ENCODE measurements at regions of chr20 and their contacts with region 1.

Region 1: DNA sequence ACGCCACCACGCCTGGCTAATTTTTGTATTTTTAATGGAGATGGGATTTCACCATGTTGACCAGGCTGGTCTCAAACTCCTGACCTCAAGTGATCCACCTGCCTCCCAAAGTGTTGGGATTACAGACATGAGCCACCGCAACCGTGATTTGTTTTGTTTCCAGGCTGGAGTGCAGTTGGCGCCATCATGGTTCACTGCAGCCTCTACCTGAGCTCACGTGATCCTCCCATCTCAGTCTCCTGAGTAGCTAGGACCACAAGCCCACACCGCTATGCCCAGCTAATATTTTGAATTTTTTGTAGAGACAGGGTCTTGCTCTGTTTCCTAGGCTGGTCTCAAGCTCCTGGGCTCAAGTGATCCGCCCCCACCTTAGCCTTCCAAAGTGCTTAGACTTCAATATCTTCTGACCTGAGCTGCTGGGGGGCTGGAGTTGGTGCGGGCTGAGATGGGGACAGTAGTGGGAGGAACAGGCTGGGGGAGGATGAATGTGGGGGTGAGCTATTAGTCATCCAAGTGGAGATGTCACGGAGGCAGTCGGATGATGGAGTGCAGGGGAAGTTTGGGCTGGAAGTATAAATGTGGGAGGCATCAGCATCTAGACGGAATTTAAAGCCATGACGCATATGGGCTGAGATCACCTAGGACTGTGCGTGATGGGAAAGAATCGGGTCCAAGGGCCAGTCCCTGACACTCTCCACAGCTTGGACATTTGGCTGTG is 23.1 kb upstream of the ZMYND8 start:
- DNase-seq: no peak
- ATAC-seq: no peak
- H3K4me3 Mint-ChIP-seq: no peak overlapping the region
- H3K27ac Mint-ChIP-seq: peak overlapping the region; percentile 55
- H3K4me1 Mint-ChIP-seq: peaks cover 37% of the 10 kb centered on the region
- H3K27me3 Mint-ChIP-seq: no peaks in the 10 kb centered on the region

Region 2: GRCh38 chr20:46720776-46721425 is 658.7 kb before region 1 on chr20:
- CTCF ChIA-PET with region 1: no interaction called
- DNase-seq: no peak
- ATAC-seq: no peak
- H3K4me3 Mint-ChIP-seq: no peak overlapping the region
- H3K27ac Mint-ChIP-seq: no peak overlapping the region
- H3K4me1 Mint-ChIP-seq: no peaks in the 10 kb centered on the region
- H3K27me3 Mint-ChIP-seq: no peaks in the 10 kb centered on the region

Region 3: DNA sequence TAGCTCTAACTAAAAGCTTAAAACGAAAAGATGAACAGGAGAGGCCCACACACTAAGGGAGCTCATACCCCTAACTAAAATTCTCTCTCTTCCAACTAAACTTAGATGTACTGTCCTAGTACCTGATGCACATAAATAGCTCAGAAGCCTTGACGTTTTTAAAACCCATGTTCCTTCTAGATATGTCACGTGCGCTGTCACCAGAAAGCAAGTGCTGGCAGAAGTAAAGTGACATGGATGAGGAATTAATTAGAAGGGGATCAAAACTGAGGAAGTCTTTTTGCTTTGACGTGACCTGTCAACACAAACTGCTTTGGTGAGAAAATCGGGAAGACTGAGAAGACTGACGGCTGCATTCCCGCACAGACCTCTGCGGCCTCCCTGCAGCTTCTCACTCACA is 165.6 kb before region 1 on chr20:
- CTCF ChIA-PET with region 1: interaction called, 31 read pairs
- DNase-seq: no peak
- ATAC-seq: no peak
- H3K4me3 Mint-ChIP-seq: no peak overlapping the region
- H3K27ac Mint-ChIP-seq: no peak overlapping the region
- H3K4me1 Mint-ChIP-seq: no peaks in the 10 kb centered on the region
- H3K27me3 Mint-ChIP-seq: no peaks in the 10 kb centered on the region

Region 4: GRCh38 chr20:47262365-47263013 is 117.1 kb before region 1 on chr20:
- CTCF ChIA-PET with region 1: interaction called, 18 read pairs
- DNase-seq: no peak
- ATAC-seq: no peak
- H3K4me3 Mint-ChIP-seq: no peak overlapping the region
- H3K27ac Mint-ChIP-seq: no peak overlapping the region
- H3K4me1 Mint-ChIP-seq: peaks cover 28% of the 10 kb centered on the region
- H3K27me3 Mint-ChIP-seq: no peaks in the 10 kb centered on the region

Region 5: GRCh38 chr20:47305667-47306066 is 73.9 kb before region 1 on chr20:
- CTCF ChIA-PET with region 1: interaction called, 17 read pairs
- DNase-seq: no peak
- ATAC-seq: no peak
- H3K4me3 Mint-ChIP-seq: no peak overlapping the region
- H3K27ac Mint-ChIP-seq: peak overlapping the region; percentile 54
- H3K4me1 Mint-ChIP-seq: peaks cover 18% of the 10 kb centered on the region
- H3K27me3 Mint-ChIP-seq: no peaks in the 10 kb centered on the region

Region 6: GRCh38 chr20:47392015-47392720 is 12.6 kb after region 1 on chr20:
- CTCF ChIA-PET with region 1: interaction called, 22 read pairs
- DNase-seq: no peak
- ATAC-seq: peak; percentile 42
- H3K4me3 Mint-ChIP-seq: no peak overlapping the region
- H3K27ac Mint-ChIP-seq: peak overlapping the region; percentile 59
- H3K4me1 Mint-ChIP-seq: peaks cover 15% of the 10 kb centered on the region
- H3K27me3 Mint-ChIP-seq: no peaks in the 10 kb centered on the region

Region 7: GRCh38 chr20:47576516-47577033 is 197.0 kb after region 1 on chr20:
- CTCF ChIA-PET with region 1: no interaction called
- DNase-seq: no peak
- ATAC-seq: peak; percentile 83
- H3K4me3 Mint-ChIP-seq: peak overlapping the region; percentile 50
- H3K27ac Mint-ChIP-seq: peak overlapping the region; percentile 60
- H3K4me1 Mint-ChIP-seq: peaks cover 52% of the 10 kb centered on the region
- H3K27me3 Mint-ChIP-seq: no peaks in the 10 kb centered on the region

Region 8: DNA sequence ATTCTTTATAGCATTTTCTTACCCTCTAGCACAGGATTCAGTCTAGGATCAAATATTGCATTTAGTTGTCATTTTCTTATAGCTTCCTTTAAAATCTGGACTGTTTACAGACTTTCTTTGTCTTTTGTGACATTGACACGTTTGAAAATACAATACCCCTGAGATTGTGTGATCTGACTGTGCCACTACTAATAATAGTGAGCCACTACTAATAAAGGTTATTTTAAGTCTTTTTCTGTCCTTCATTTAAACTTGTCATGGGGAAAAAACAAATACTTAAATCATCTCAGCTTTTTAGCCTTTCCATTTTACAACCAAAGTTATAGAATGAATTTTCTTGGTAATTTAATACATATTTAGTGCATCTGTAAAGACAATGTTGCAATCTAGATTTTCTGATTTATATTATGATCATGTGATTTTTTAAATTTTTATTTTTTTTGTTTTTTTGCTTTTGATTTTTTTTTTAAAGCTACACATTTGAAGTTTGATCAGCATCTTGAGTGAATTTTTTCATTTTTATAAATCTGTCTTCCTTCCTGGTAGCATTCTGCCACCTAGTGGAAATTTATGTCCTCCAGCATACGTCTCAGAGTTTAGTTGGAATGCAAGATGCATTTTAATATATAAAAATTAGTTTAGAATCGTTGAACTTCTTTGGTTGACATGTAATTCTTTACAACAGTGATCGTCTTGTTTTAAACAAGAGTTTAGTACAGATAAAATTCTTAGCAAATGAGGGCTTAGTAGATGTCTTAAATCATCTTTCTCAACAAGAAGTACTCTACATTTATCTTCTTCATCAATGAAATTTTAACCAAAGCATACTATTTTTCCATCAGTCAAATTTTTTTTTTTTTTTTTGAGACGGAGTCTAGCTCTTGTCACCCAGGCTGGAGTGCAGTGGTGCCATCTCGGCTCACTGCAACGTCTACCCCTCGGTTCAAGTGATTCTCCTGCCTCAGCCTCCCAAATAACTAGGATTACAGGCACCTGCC is 241.5 kb after region 1 on chr20:
- CTCF ChIA-PET with region 1: interaction called, 53 read pairs
- DNase-seq: no peak
- ATAC-seq: peak; percentile 49
- H3K4me3 Mint-ChIP-seq: no peak overlapping the region
- H3K27ac Mint-ChIP-seq: peak overlapping the region; percentile 9
- H3K4me1 Mint-ChIP-seq: peaks cover 46% of the 10 kb centered on the region
- H3K27me3 Mint-ChIP-seq: no peaks in the 10 kb centered on the region